ENCODE measurements at regions of chr18 and their contacts with region 1.

Region 1: DNA sequence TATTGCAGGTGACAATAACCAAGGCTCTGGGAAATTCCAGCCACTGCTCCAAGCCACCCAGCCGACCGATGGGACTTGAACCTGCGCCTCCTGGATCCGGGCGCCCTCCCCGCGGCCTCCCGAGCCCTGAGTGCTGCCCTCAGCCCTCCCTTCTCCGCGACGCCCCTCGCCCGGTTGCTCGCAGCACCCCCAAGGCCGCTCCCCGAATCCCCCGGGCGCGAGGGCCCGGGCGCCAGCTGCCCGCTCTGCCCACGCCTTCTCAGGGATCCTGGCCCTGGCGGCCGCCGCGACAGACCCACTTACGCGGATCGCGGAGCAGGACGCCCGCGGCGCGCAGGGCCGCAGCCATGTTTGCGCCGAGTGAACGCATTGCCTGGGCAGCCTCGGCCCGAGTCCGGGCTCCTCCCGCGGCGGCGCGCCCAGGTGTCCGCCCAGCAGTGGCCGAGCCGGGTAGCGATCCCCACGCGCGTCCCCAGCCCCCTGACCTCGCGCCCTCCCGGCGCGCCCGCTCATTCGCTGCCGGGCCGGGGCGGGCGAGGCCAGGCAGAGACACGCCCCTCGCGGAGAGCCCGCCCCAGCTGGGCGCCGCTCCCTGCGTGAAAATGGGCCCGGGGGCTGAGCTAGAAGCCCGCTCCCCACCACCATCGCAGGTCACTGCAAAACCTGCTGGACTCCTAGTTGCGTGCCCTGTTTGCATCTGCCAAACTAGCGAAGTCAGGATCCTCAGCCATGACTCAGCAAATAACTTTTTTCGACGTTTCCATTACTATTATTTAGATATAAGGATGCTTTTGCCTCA is at the start of gene FECH:
- DNase-seq: peak; percentile 90
- H3K4me3 ChIP-seq: peak within 1 kb of the TSS; percentile 66 to 96 (median 88)
- H3K27ac ChIP-seq: peak within 1 kb of the TSS; percentile 88 to 93 (median 90)
- H3K4me1 ChIP-seq: peaks cover 0 to 17% (median 11%) of the 10 kb centered on the region in 4 donors
- H3K27me3 ChIP-seq: no peaks in the 10 kb centered on the region
- CTCF ChIP-seq: no peak
- EP300 ChIP-seq: no peak
- POLR2A ChIP-seq: peak; percentile 5 to 39
- total RNA-seq, gene FECH: 30.0 to 64.6 (median 40.6) TPM

Region 2: GRCh38 chr18:57242289-57242688 is 344.2 kb before region 1 on chr18:
- intact Hi-C with region 1: no loop called
- DNase-seq: no peak
- H3K4me3 ChIP-seq: no peak overlapping the region
- H3K27ac ChIP-seq: no peak overlapping the region
- H3K4me1 ChIP-seq: no peaks in the 10 kb centered on the region
- H3K27me3 ChIP-seq: no peaks in the 10 kb centered on the region
- CTCF ChIP-seq: no peak
- EP300 ChIP-seq: no peak
- POLR2A ChIP-seq: no peak

Region 3: GRCh38 chr18:57621246-57621604 is 34.8 kb after region 1 on chr18:
- intact Hi-C with region 1: loop called (anchors 5 kb)
- DNase-seq: no peak
- H3K4me3 ChIP-seq: peak overlapping the region; percentile 67 to 92 (median 84)
- H3K27ac ChIP-seq: peak overlapping the region; percentile 89 to 95 (median 92)
- H3K4me1 ChIP-seq: peaks cover 0 to 26% (median 19%) of the 10 kb centered on the region in 4 donors
- H3K27me3 ChIP-seq: no peaks in the 10 kb centered on the region
- CTCF ChIP-seq: no peak
- EP300 ChIP-seq: no peak
- POLR2A ChIP-seq: no peak

Region 4: DNA sequence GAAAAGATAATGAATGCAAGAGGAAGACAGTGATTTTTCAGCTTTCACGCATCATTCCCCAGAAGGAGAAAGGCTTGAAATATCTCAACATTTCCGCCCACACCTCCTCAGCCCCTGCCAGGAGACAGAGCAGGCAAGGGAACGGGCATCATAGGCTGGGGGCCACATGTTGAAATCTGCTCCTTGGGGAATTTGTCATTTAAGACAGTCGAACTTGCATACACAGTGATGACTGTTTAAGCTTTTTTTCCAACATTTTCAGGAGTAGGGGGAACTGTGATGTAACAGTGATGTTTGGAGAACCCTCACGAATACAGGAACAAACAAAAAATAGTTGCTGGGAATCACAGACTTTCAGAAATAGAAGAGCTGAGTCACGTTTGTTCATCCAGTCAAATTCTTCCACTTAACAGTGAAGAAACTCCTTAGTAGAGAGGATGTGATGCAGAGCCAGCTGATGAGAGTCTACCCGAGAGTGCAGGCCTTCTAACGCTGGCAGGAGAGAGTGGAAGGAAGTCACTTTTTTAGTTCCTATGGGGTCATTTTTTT is 775.7 kb after region 1 on chr18:
- intact Hi-C with region 1: no loop called
- DNase-seq: peak; percentile 74
- H3K4me3 ChIP-seq: no peak overlapping the region
- H3K27ac ChIP-seq: peak overlapping the region; percentile 73 to 77 (median 74)
- H3K4me1 ChIP-seq: peaks cover 0 to 33% (median 26%) of the 10 kb centered on the region in 4 donors
- H3K27me3 ChIP-seq: no peaks in the 10 kb centered on the region
- CTCF ChIP-seq: no peak
- EP300 ChIP-seq: no peak
- POLR2A ChIP-seq: no peak

Measured in sigmoid colon (tissue), 7 donors.